GM13976 (cell line): ENCODE measurements at regions of chr1 and their contacts with region 1.

Region 1: DNA sequence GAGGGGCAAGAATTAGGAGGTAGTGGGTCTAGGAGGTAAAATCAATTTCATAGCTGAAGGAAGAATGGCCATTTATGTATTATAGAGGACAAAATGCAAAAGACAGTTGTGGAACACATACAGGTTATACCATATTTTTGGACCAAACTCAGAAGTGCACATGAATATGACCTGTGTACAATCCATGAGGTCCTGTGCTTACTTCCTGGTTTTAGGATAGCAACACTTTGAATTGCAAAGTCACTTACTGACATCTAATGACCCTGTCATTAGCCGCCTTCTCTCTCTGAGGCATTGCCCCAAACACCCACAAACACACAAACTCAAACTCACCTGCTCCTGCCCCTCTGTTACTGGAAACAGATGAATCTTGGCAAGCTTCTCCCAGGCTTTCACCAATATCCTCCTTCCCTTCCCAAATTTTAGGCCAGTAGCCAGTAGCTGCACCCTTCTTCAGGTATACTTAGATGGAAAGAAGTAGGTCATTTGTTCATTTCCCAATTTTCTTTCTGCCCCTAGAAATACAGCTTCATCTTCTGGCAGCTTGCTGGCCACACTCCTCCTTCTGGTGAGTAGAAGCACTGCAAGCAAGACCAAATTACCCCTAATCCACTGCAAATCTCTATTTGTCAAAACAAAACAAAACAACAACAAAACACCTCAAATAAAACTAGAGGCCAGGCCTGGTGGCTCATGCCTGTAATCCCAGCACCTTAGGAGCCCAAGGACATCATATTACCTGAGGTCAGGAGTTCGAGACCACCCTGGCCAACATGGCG is 13.7 kb upstream of the RPL5 start:
- DNase-seq: peak; percentile 51
- CTCF ChIP-seq: peak; percentile 67

Region 2: GRCh38 chr1:92754000-92754718 is 64.0 kb before region 1 on chr1:
- in situ Hi-C with region 1: loop called (anchors 10 kb)
- DNase-seq: no peak
- CTCF ChIP-seq: no peak